ENCODE measurements at regions of chr4 and their contacts with region 1.

Region 1: GRCh38 chr4:41214136-41214824 is at the start of gene APBB2:
- DNase-seq: peak; percentile 96
- ATAC-seq: peak; percentile 74
- H3K4me3 ChIP-seq: peak within 1 kb of the TSS; percentile 99
- H3K27ac ChIP-seq: 0 out of 2 replicates have a peak within 1 kb of the TSS, but pooled peaks have one; percentile 18
- H3K4me1 ChIP-seq: peaks cover 26% of the 10 kb centered on the region
- H3K27me3 ChIP-seq: no peaks in the 10 kb centered on the region
- CTCF ChIP-seq: peak; percentile 49
- total RNA-seq, gene APBB2: 24.7 and 26.7 TPM in 2 replicates

Region 2: GRCh38 chr4:40648742-40649281 is 565.5 kb before region 1 on chr4:
- CTCF ChIA-PET with region 1: no interaction called
- POLR2A ChIA-PET with region 1: no interaction called
- intact Hi-C with region 1: no loop called
- DNase-seq: no peak
- ATAC-seq: no peak
- H3K4me3 ChIP-seq: no peak overlapping the region
- H3K27ac ChIP-seq: no peak overlapping the region
- H3K4me1 ChIP-seq: no peaks in the 10 kb centered on the region
- H3K27me3 ChIP-seq: no peaks in the 10 kb centered on the region
- CTCF ChIP-seq: no peak

Region 3: GRCh38 chr4:40749717-40750460 is 464.4 kb before region 1 on chr4 and contains the start of gene NSUN7:
- CTCF ChIA-PET with region 1: no interaction called
- POLR2A ChIA-PET with region 1: no interaction called
- intact Hi-C with region 1: loop called (anchors 5 kb)
- DNase-seq: peak; percentile 75
- ATAC-seq: peak; percentile 71
- H3K4me3 ChIP-seq: peak within 1 kb of the TSS; percentile 74
- H3K27ac ChIP-seq: no peak within 1 kb of the TSS
- H3K4me1 ChIP-seq: no peaks in the 10 kb centered on the region
- H3K27me3 ChIP-seq: no peaks in the 10 kb centered on the region
- CTCF ChIP-seq: no peak
- total RNA-seq, gene NSUN7: 4.2 and 6.7 TPM in 2 replicates

Region 4: GRCh38 chr4:40908702-40909362 is 305.4 kb before region 1 on chr4:
- CTCF ChIA-PET with region 1: interaction called, 7 read pairs
- POLR2A ChIA-PET with region 1: no interaction called
- intact Hi-C with region 1: loop called (anchors 5 kb)
- DNase-seq: peak; percentile 72
- ATAC-seq: peak; percentile 79
- H3K4me3 ChIP-seq: peak overlapping the region; percentile 35; the same call in 1 of the 2 replicates
- H3K27ac ChIP-seq: peak overlapping the region; percentile 93
- H3K4me1 ChIP-seq: peaks cover 19% of the 10 kb centered on the region
- H3K27me3 ChIP-seq: no peaks in the 10 kb centered on the region
- CTCF ChIP-seq: peak; percentile 90

Region 5: DNA sequence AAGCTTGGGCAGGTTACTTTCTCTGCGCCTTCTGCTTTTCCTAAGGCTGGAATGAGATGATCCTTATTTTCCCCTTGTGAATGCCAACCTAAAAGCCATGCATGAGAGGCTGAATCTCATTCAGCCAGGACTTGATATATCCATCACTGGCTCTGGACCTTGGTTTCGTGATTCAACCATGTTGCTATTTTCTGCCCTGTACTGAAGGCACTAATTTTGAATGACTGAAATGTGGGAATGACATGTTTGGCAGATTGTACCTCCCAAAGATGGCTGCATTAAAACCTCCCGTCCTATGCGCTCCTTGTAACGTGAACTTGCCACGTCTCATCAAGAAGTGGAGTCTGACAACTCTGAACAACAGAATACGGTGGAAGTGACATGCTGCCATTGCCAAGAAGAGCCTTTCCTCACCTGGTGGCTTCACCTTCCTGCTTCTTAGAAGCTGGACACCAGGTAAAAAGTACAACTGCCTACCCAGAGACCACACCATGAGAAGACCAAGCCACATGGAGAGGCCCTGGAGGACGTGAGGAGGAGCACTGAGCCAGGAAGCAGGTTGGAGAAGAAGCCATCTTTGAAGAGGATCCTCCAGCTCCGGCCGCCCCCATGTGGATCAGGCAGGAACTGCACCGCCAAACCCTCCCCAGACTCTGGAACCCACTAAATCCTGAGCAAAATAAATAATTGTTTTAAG is 290.0 kb before region 1 on chr4:
- CTCF ChIA-PET with region 1: interaction called, 6 read pairs
- POLR2A ChIA-PET with region 1: no interaction called
- intact Hi-C with region 1: loop called (anchors 1 kb)
- DNase-seq: peak; percentile 59
- ATAC-seq: peak; percentile 73; the same call in 1 of the 2 replicates
- H3K4me3 ChIP-seq: no peak overlapping the region
- H3K27ac ChIP-seq: no peak overlapping the region
- H3K4me1 ChIP-seq: no peaks in the 10 kb centered on the region
- H3K27me3 ChIP-seq: no peaks in the 10 kb centered on the region
- CTCF ChIP-seq: peak; percentile 81

Region 6: DNA sequence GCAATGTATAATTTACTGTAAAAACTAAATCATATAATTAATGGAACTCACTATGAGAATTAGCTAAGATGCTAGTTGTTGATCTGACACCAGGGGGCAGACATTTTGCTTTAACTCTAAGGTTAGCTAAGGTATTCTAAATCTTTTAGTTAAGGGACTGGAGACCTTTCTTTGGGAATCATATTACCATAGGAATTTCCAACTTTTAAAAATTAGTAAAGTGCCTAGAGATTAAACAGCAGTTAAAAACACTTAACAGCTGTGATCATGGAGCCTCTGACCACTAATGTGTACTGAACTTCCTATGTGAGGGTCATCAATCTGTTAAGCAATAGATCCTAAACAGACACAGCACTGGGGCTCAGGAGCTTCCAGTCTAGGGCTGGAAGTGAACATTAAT is 237.9 kb before region 1 on chr4:
- CTCF ChIA-PET with region 1: interaction called, 4 read pairs
- POLR2A ChIA-PET with region 1: no interaction called
- intact Hi-C with region 1: loop called (anchors 1 kb)
- DNase-seq: peak; percentile 79
- ATAC-seq: peak; percentile 64
- H3K4me3 ChIP-seq: no peak overlapping the region
- H3K27ac ChIP-seq: no peak overlapping the region
- H3K4me1 ChIP-seq: no peaks in the 10 kb centered on the region
- H3K27me3 ChIP-seq: no peaks in the 10 kb centered on the region
- CTCF ChIP-seq: peak; percentile 67

Region 7: GRCh38 chr4:40992472-40993295 is 221.6 kb before region 1 on chr4:
- CTCF ChIA-PET with region 1: no interaction called
- POLR2A ChIA-PET with region 1: no interaction called
- intact Hi-C with region 1: loop called (anchors 5 kb)
- DNase-seq: peak; percentile 38
- ATAC-seq: no peak
- H3K4me3 ChIP-seq: no peak overlapping the region
- H3K27ac ChIP-seq: peak overlapping the region; percentile 25
- H3K4me1 ChIP-seq: peaks cover 64% of the 10 kb centered on the region
- H3K27me3 ChIP-seq: no peaks in the 10 kb centered on the region
- CTCF ChIP-seq: no peak

Region 8: GRCh38 chr4:41177016-41177415 is 37.3 kb before region 1 on chr4:
- CTCF ChIA-PET with region 1: interaction called, 3 read pairs
- POLR2A ChIA-PET with region 1: no interaction called
- intact Hi-C with region 1: loop called (anchors 5 kb)
- DNase-seq: peak; percentile 61
- ATAC-seq: peak; percentile 60
- H3K4me3 ChIP-seq: no peak overlapping the region
- H3K27ac ChIP-seq: no peak overlapping the region
- H3K4me1 ChIP-seq: peaks cover 43% of the 10 kb centered on the region
- H3K27me3 ChIP-seq: no peaks in the 10 kb centered on the region
- CTCF ChIP-seq: 0 out of 2 replicates have a peak, but pooled peaks have one; percentile 18